ENCODE measurements at regions of chr12 and their contacts with region 1.

Region 1: GRCh38 chr12:78759367-78759766 is 105.2 kb upstream of the SYT1 start:
- DNase-seq: no peak
- H3K4me3 Mint-ChIP-seq: no peak overlapping the region
- H3K27ac Mint-ChIP-seq: no peak overlapping the region
- H3K4me1 Mint-ChIP-seq: no peaks in the 10 kb centered on the region
- H3K27me3 Mint-ChIP-seq: no peaks in the 10 kb centered on the region

Region 2: DNA sequence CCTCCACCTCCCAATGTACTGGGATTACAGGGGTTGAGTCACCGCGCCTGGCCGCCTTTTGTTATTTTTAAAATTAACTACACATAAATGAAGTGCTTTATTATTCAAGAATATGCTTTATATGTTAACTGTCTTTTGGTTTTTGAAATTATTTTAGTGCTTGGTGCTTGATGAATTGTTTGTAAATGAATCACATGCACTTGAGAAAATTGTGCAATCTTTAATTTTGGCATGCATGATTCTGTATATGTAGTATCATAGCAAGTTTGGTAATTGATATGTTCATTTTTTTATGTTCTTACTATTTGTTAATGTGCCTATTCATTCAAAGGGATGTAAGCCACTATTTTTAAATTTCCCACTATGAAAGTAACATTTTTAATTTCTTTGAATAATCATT is 487.8 kb before region 1 on chr12:
- CTCF ChIA-PET with region 1: no interaction called
- intact Hi-C with region 1: no loop called
- DNase-seq: no peak
- H3K4me3 Mint-ChIP-seq: no peak overlapping the region
- H3K27ac Mint-ChIP-seq: no peak overlapping the region
- H3K4me1 Mint-ChIP-seq: no peaks in the 10 kb centered on the region
- H3K27me3 Mint-ChIP-seq: no peaks in the 10 kb centered on the region

Region 3: GRCh38 chr12:79587368-79587767 is 828.0 kb after region 1 on chr12:
- CTCF ChIA-PET with region 1: no interaction called
- intact Hi-C with region 1: loop called (anchors 10 kb)
- DNase-seq: no peak
- H3K4me3 Mint-ChIP-seq: no peak overlapping the region
- H3K27ac Mint-ChIP-seq: no peak overlapping the region
- H3K4me1 Mint-ChIP-seq: no peaks in the 10 kb centered on the region
- H3K27me3 Mint-ChIP-seq: no peaks in the 10 kb centered on the region

Measured in activated naive CD4-positive, alpha-beta T cell treated with anti-CD3 and anti-CD28 coated beads for 36 hours (primary cell).